Activated CD4-positive, alpha-beta T cell treated with anti-CD3 and anti-CD28 coated beads for 36 hours (primary cell): ENCODE measurements at regions of chr1 and their contacts with region 1.

Region 1: GRCh38 chr1:92563457-92564216 is 76.9 kb upstream of the GFI1 start:
- DNase-seq: no peak
- ATAC-seq: peak; percentile 31
- H3K4me3 Mint-ChIP-seq: no peak overlapping the region
- H3K27ac Mint-ChIP-seq: no peak overlapping the region
- H3K4me1 Mint-ChIP-seq: peaks cover 32% of the 10 kb centered on the region
- H3K27me3 Mint-ChIP-seq: no peaks in the 10 kb centered on the region

Region 2: DNA sequence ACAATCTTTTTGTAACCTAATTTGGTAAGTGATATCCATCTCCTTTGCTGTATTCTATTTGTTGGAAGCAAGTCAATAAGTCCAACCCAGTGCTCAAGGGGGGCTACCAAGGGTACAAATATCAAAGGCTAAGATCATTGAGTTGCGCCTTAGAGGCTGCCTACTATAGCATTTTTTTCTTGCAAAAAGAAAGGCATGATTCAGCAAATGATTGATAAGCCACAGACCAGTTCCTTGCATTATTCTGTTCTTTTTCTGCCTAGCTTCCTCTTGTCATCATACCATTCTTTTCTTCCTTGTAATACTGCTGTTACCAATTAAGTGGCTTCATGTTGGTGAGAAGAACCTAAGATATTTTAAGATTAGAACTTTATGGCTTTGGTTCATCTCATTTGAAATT is 1816.8 kb before region 1 on chr1:
- CTCF ChIA-PET with region 1: no interaction called
- POLR2A ChIA-PET with region 1: no interaction called
- intact Hi-C with region 1: no loop called
- DNase-seq: no peak
- ATAC-seq: no peak
- H3K4me3 Mint-ChIP-seq: no peak overlapping the region
- H3K27ac Mint-ChIP-seq: no peak overlapping the region
- H3K4me1 Mint-ChIP-seq: no peaks in the 10 kb centered on the region
- H3K27me3 Mint-ChIP-seq: peaks cover 15% of the 10 kb centered on the region

Region 3: DNA sequence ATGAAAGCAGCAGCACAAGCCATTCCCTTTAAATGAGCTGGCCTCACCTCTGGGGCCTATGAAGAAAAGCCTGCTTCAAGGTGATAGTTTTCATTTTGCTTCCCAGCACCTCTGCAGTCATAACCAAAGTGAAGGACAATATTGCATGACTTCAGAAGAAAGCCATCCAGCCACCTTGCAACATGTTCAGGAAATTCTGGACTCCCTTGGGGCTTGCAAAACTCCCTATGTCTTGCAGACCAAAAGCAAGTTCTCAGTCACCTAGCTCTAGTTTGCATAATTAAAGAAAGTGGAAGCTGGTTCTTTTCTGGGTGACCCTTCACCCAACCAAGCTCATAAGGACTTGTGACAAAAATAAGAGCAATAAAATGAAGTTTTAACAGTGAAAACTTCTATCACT is 164.6 kb before region 1 on chr1:
- CTCF ChIA-PET with region 1: no interaction called
- POLR2A ChIA-PET with region 1: interaction called, 10 read pairs
- intact Hi-C with region 1: no loop called
- DNase-seq: no peak
- ATAC-seq: no peak
- H3K4me3 Mint-ChIP-seq: no peak overlapping the region
- H3K27ac Mint-ChIP-seq: no peak overlapping the region
- H3K4me1 Mint-ChIP-seq: no peaks in the 10 kb centered on the region
- H3K27me3 Mint-ChIP-seq: no peaks in the 10 kb centered on the region

Region 4: DNA sequence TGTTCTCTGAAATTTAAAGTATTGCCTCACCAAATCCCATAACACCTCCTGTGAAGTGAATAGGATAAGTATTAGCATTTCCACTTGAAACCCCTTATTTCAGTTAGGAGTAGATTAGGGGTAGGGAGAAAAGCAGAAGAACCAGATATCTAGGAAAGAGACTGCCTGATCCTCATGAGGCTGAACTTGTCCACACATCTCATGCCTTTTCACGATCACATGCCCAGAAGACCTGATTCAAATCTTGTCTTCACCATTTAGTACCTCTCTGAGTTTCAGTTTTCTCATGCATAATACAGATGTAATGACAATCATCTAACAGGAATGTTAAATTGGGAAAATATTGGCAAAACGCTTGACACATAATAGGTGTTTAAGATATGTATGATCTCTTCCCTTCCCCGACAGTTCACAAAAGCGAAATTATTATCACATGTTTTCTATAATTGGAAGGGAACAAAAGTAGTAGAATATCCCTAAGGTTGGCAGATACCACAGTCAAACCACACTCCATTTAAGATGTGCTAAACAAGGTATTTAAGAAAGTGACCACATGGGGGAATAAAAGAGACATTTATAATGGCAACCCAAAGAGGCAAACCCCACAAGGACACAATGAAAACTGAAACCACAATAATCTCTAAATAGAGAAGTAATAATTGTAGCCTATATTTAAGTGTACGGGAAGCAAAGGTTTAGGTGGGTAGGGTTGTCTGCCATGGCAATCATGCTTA is 102.1 kb before region 1 on chr1:
- CTCF ChIA-PET with region 1: no interaction called
- POLR2A ChIA-PET with region 1: no interaction called
- intact Hi-C with region 1: no loop called
- DNase-seq: no peak
- ATAC-seq: peak; percentile 24
- H3K4me3 Mint-ChIP-seq: no peak overlapping the region
- H3K27ac Mint-ChIP-seq: no peak overlapping the region
- H3K4me1 Mint-ChIP-seq: peaks cover 51% of the 10 kb centered on the region
- H3K27me3 Mint-ChIP-seq: no peaks in the 10 kb centered on the region

Region 5: DNA sequence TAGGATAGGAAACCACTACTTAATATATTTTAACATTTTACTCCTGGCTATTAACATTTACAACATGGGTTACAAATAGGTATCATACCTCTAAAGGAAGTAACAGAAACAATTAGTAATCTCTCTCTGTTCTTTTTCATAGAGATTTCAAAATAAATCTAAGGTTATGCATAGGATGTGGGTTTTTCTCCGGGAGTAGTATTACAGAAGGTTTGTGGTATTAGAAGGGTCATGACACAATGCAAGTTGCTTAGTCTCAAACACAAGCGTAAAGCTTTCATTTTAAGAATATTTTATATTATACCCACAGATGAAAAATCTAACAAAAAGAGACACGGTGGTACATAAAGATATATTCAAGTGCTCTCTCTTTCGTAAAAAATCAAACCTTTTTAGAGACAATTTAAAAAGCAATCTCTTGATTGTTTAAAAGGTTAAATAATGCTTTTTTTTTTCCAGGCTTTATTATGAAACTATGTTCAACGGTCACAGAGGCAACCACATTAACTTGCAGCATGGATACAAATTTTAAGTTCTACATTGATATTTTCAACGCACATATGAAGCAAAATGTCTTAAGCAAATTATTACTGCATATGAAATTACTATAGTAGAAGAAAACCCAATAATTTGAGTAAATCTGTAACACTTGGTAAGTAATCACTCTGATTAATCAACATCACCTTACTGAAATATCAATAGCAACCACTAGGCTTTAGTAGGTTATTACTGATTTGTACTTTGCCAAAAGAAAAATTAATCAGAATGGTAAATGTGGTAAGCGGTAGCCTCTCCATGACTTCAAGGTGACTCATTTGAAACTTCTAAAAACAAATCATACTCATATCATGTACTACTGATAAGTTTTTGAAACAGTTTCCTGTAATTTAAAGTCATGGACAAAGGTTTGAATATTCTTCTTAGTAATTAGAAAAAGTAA is 20.5 kb after region 1 on chr1:
- CTCF ChIA-PET with region 1: interaction called, 3 read pairs
- POLR2A ChIA-PET with region 1: interaction called, 3 read pairs
- intact Hi-C with region 1: loop called in 1 of 2 experiments (anchors 2 kb)
- DNase-seq: no peak
- ATAC-seq: peak; percentile 60
- H3K4me3 Mint-ChIP-seq: peak overlapping the region; percentile 68
- H3K27ac Mint-ChIP-seq: peak overlapping the region; percentile 92
- H3K4me1 Mint-ChIP-seq: peaks cover 79% of the 10 kb centered on the region
- H3K27me3 Mint-ChIP-seq: no peaks in the 10 kb centered on the region

Region 6: GRCh38 chr1:92728697-92729096 is 165.1 kb after region 1 on chr1:
- CTCF ChIA-PET with region 1: no interaction called
- POLR2A ChIA-PET with region 1: no interaction called
- intact Hi-C with region 1: no loop called
- DNase-seq: no peak
- ATAC-seq: no peak
- H3K4me3 Mint-ChIP-seq: no peak overlapping the region
- H3K27ac Mint-ChIP-seq: no peak overlapping the region
- H3K4me1 Mint-ChIP-seq: no peaks in the 10 kb centered on the region
- H3K27me3 Mint-ChIP-seq: no peaks in the 10 kb centered on the region